ENCODE measurements at regions of chr5 and their contacts with region 1.

Region 1: DNA sequence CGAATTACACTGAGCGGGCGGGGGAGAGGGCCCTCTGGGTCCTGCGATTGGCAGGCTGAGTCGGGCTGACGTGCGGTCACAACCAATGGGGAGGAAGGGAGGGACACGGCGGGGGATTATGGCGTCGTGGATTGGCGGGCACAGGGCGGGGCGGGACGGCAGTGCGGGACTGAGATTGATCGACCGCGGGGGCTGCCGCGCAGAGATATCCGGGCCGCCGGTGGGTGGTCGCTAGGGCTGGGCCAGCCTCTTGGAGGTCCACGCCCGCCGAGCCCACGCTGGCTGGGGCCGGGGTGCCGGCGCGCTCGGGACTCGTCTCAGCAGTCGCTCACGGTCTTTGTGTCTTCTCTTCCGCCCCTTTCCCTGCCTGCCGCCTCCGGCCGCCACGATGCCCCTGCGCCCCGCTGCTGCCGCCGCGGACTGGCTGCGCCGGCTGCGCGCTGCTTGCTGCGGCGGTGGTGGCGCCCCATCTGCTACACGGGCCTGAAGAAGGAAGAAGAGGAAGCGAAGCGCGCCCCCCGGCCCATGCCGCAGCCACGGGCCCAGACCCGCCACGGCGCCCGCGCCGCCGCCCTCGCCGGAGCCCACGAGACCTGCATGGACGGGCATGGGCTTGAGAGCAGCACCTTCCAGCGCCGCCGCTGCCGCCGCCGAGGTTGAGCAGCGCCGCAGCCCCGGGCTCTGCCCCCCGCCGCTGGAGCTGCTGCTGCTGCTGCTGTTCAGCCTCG is at the start of gene RGMB:
- DNase-seq: peak; percentile 98
- H3K4me3 Mint-ChIP-seq: peak within 1 kb of the TSS; percentile 92
- H3K27ac Mint-ChIP-seq: peak within 1 kb of the TSS; percentile 99
- H3K4me1 Mint-ChIP-seq: peaks cover 26% of the 10 kb centered on the region
- H3K27me3 Mint-ChIP-seq: no peaks in the 10 kb centered on the region
- CTCF ChIP-seq: no peak
- total RNA-seq, gene RGMB: 17.5 and 20.3 TPM in 2 replicates

Region 2: DNA sequence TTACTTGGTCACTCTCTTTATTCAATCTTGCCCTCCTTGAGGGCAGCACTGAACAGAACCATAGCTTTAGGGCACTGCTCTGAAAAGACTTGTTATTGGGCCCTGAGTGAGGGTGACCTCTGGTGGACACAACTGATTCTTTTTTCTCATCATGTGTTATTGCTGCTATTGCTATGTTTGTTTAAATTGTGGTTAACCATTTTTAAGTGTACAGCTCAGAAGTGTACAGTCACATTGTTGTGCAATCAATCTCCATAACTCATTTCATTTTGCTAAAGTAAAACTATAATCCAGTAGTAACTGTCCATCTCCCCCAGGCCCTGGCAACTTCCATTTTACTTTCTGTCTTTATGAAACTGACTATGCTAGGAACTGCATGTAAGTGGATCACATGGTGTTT is 1239.5 kb before region 1 on chr5:
- CTCF ChIA-PET with region 1: interaction called, 43 read pairs
- POLR2A ChIA-PET with region 1: interaction called, 6 read pairs
- intact Hi-C with region 1: loop called (anchors 1 kb)
- DNase-seq: peak; percentile 87
- H3K4me3 Mint-ChIP-seq: no peak overlapping the region
- H3K27ac Mint-ChIP-seq: peak overlapping the region; percentile 4
- H3K4me1 Mint-ChIP-seq: peaks cover 17% of the 10 kb centered on the region
- H3K27me3 Mint-ChIP-seq: no peaks in the 10 kb centered on the region
- CTCF ChIP-seq: peak; percentile 72

Region 3: DNA sequence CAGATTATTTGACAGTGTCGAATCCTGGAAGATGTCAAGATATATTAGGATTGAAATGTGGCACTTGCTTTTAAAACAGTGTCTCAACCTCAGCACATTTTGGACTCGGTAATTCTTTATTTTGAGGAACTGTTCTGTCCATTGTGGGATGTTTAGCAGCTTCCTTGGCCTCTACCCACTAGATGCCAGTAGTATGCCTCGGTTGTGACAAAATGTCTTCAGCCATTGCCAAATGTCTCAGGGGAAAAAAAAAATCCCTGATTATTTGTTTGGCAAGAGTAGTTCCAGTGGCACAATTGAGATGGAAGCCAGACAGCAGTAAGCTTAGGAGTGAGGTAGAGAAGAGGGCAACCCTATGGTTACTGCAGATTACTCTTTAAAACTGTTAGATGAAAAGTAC is 896.0 kb before region 1 on chr5:
- CTCF ChIA-PET with region 1: interaction called, 4 read pairs
- POLR2A ChIA-PET with region 1: no interaction called
- intact Hi-C with region 1: loop called (anchors 10 kb)
- DNase-seq: no peak
- H3K4me3 Mint-ChIP-seq: no peak overlapping the region
- H3K27ac Mint-ChIP-seq: no peak overlapping the region
- H3K4me1 Mint-ChIP-seq: peaks cover 7% of the 10 kb centered on the region
- H3K27me3 Mint-ChIP-seq: no peaks in the 10 kb centered on the region
- CTCF ChIP-seq: no peak

Region 4: DNA sequence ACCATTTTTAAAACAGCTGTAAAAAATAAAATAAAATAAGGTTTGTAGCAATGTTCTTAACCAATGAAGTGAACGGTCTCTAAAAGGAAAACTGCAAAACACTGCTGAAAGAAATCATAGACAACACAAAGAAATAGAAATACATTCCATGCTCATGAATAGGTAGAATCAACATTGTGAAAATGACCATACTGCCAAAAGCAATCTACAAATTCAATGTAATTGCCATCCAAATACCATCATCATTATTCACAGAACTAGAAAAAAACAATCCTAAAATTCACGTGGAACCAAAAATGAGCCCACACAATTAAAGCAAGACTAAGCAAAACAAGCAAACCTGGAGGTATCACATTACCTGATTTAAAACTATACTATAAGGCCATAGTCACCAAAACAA is 67.8 kb before region 1 on chr5:
- CTCF ChIA-PET with region 1: no interaction called
- POLR2A ChIA-PET with region 1: no interaction called
- intact Hi-C with region 1: no loop called
- DNase-seq: no peak
- H3K4me3 Mint-ChIP-seq: no peak overlapping the region
- H3K27ac Mint-ChIP-seq: no peak overlapping the region
- H3K4me1 Mint-ChIP-seq: no peaks in the 10 kb centered on the region
- H3K27me3 Mint-ChIP-seq: no peaks in the 10 kb centered on the region
- CTCF ChIP-seq: no peak

Region 5: GRCh38 chr5:98786191-98786853 is 12.7 kb after region 1 on chr5:
- CTCF ChIA-PET with region 1: interaction called, 86 read pairs
- POLR2A ChIA-PET with region 1: interaction called, 28 read pairs
- intact Hi-C with region 1: no loop called
- DNase-seq: no peak
- H3K4me3 Mint-ChIP-seq: no peak overlapping the region
- H3K27ac Mint-ChIP-seq: peak overlapping the region; percentile 28
- H3K4me1 Mint-ChIP-seq: peaks cover 40% of the 10 kb centered on the region
- H3K27me3 Mint-ChIP-seq: no peaks in the 10 kb centered on the region
- CTCF ChIP-seq: no peak

Region 6: DNA sequence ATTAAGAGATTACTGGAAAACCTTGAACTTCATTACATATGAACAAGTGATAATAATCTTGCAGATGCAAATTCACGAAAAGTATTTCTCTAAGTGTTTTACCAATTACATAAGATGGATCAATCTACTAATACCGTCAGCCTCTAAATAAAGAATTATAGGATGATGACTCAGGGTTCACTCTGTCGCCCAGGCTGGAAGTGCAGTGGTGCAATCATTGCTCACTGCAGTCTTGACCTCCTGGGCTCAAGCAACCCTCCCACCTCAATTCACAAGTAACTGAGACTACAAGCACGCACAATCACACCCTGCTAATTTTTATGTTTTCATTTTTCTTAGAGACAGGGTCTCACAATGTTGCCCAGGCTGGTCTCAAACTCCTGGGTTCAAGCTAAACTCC is 99.0 kb after region 1 on chr5:
- CTCF ChIA-PET with region 1: no interaction called
- POLR2A ChIA-PET with region 1: no interaction called
- intact Hi-C with region 1: no loop called
- DNase-seq: peak; percentile 68
- H3K4me3 Mint-ChIP-seq: no peak overlapping the region
- H3K27ac Mint-ChIP-seq: no peak overlapping the region
- H3K4me1 Mint-ChIP-seq: no peaks in the 10 kb centered on the region
- H3K27me3 Mint-ChIP-seq: no peaks in the 10 kb centered on the region
- CTCF ChIP-seq: no peak

Region 7: GRCh38 chr5:99032234-99033013 is 258.8 kb after region 1 on chr5:
- CTCF ChIA-PET with region 1: interaction called, 3 read pairs
- POLR2A ChIA-PET with region 1: interaction called, 4 read pairs
- intact Hi-C with region 1: loop called (anchors 1 kb)
- DNase-seq: peak; percentile 84
- H3K4me3 Mint-ChIP-seq: peak overlapping the region; percentile 72
- H3K27ac Mint-ChIP-seq: peak overlapping the region; percentile 24
- H3K4me1 Mint-ChIP-seq: peaks cover 14% of the 10 kb centered on the region
- H3K27me3 Mint-ChIP-seq: no peaks in the 10 kb centered on the region
- CTCF ChIP-seq: peak; percentile 78

Region 8: DNA sequence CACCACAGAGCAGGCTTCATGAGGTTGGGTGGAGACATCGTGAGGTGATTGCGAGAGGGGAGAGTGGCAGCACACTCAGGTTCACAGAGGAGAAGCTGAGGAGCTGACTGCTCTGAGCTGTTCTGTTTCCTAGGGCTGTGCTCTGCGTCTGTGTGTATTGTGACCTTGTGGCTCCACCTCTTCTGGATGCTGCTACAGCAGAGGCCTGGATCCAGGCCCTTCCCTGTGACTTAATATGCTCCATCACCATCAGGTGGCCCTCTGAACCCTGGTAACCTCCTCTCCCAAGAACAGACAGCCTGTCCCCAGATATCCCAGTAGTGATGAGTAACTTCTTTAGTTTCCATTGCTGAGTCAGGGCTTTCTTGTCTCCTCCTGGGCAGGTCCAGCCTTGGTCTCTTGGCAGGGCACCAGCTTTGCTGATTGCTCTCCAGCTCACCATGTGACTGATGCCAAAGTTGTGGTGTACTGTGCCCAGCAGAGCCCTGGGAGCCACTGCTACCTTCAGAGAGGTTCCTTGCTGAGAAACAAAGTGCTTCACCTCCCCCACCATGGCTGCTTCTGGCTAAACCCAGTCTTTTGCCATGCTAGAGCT is 368.0 kb after region 1 on chr5:
- CTCF ChIA-PET with region 1: no interaction called
- POLR2A ChIA-PET with region 1: no interaction called
- intact Hi-C with region 1: no loop called
- DNase-seq: peak; percentile 61
- H3K4me3 Mint-ChIP-seq: no peak overlapping the region
- H3K27ac Mint-ChIP-seq: no peak overlapping the region
- H3K4me1 Mint-ChIP-seq: no peaks in the 10 kb centered on the region
- H3K27me3 Mint-ChIP-seq: peaks cover 21% of the 10 kb centered on the region
- CTCF ChIP-seq: no peak

Region 9: DNA sequence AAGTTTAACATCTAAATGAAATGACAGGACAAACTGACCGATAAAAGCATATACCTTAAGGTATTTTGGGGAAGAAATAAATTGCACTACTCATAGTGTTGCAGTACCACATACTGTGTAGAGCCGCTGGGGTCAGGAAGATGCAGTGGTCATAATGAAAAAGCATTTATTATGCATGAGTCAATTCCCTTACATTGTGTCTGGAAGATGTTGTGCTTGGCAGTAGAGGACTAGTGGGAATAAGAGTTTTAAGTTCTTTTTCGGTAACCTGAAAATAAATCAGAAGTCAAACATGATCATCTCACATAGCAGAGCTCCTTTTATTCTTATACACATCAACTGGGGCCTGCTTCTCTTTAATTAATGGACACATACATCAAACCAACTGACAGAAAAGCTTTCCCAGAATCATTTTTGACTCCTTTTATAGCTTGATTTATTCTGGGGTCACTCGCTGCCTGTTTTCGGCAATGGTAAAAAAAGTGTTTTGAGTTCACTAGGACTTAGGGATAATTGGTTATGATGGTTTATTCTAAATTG is 417.6 kb after region 1 on chr5:
- CTCF ChIA-PET with region 1: no interaction called
- POLR2A ChIA-PET with region 1: no interaction called
- intact Hi-C with region 1: no loop called
- DNase-seq: no peak
- H3K4me3 Mint-ChIP-seq: no peak overlapping the region
- H3K27ac Mint-ChIP-seq: no peak overlapping the region
- H3K4me1 Mint-ChIP-seq: no peaks in the 10 kb centered on the region
- H3K27me3 Mint-ChIP-seq: peaks cover 52% of the 10 kb centered on the region
- CTCF ChIP-seq: no peak

Measured in MCF 10A (cell line).